CD8-positive, alpha-beta T cell (primary cell): ENCODE measurements at regions of chr7 and their contacts with region 1.

Region 1: GRCh38 chr7:150631866-150632864 is at the start of gene GIMAP6:
- DNase-seq: peak in 8 of 9 experiments; percentile 33 to 79 (median 50)
- ATAC-seq: peak; percentile 61
- H3K4me3 ChIP-seq: peak within 1 kb of the TSS; percentile 82 to 85
- H3K4me3 Mint-ChIP-seq: peak within 1 kb of the TSS; percentile 97
- H3K27ac ChIP-seq: peak within 1 kb of the TSS; percentile 58 to 83
- H3K27ac Mint-ChIP-seq: peak within 1 kb of the TSS; percentile 96
- H3K4me1 ChIP-seq: peaks cover 54% of the 10 kb centered on the region
- H3K4me1 Mint-ChIP-seq: peaks cover 86% of the 10 kb centered on the region
- H3K27me3 ChIP-seq: no peaks in the 10 kb centered on the region
- H3K27me3 Mint-ChIP-seq: no peaks in the 10 kb centered on the region
- CTCF ChIP-seq: no peak
- total RNA-seq, gene GIMAP6: 10.5 to 10.8 TPM

Region 2: DNA sequence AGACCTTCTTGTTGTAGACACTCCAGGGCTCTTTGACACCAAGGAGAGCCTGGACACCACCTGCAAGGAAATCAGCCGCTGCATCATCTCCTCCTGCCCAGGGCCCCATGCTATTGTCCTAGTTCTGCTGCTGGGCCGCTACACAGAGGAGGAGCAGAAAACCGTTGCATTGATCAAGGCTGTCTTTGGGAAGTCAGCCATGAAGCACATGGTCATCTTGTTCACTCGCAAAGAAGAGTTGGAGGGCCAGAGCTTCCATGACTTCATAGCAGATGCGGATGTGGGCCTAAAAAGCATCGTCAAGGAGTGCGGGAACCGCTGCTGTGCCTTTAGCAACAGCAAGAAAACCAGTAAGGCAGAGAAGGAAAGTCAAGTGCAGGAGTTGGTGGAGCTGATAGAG is 112.0 kb before region 1 on chr7:
- CTCF ChIA-PET with region 1: interaction called, 5 read pairs
- POLR2A ChIA-PET with region 1: interaction called, 34 read pairs
- intact Hi-C with region 1: loop called in 1 of 2 experiments (anchors 1 kb)
- DNase-seq: peak in 6 of 9 experiments; percentile 9 to 75 (median 33)
- ATAC-seq: peak; percentile 27
- H3K4me3 ChIP-seq: peak overlapping the region; percentile 58 to 76
- H3K4me3 Mint-ChIP-seq: peak overlapping the region; percentile 100
- H3K27ac ChIP-seq: peak overlapping the region; percentile 58 to 75
- H3K27ac Mint-ChIP-seq: peak overlapping the region; percentile 91
- H3K4me1 ChIP-seq: peaks cover 12% of the 10 kb centered on the region
- H3K4me1 Mint-ChIP-seq: peaks cover 44% of the 10 kb centered on the region
- H3K27me3 ChIP-seq: no peaks in the 10 kb centered on the region
- H3K27me3 Mint-ChIP-seq: no peaks in the 10 kb centered on the region
- CTCF ChIP-seq: no peak

Region 3: DNA sequence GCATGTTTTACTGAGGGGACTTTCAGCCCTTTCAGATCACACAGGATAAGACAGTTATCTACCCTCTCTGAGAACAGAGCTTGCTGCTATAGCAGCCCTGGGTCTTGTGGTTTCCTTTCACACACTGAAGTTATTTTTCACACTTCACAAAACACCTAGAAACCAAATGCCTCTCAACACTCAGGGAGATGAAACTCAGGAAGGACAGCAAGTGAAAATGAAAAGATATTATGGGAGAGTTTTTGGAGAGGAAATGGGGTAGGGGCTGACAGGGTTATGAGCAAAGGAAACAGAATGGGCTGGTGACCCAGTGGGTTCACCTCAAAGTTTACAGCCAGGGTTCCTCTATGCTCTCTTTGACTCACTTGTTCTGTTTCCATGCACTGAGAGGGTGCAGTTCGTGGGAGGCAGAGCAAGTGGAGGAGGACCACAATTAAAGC is 36.3 kb after region 1 on chr7:
- CTCF ChIA-PET with region 1: interaction called, 5 read pairs
- POLR2A ChIA-PET with region 1: interaction called, 44 read pairs
- intact Hi-C with region 1: loop called (anchors 1 to 2 kb)
- DNase-seq: peak in 6 of 9 experiments; percentile 60 to 94 (median 72)
- ATAC-seq: peak; percentile 76
- H3K4me3 ChIP-seq: peak overlapping the region in 1 of 2 experiments; percentile 17
- H3K4me3 Mint-ChIP-seq: peak overlapping the region; percentile 36
- H3K27ac ChIP-seq: peak overlapping the region; percentile 63 to 95
- H3K27ac Mint-ChIP-seq: peak overlapping the region; percentile 97
- H3K4me1 ChIP-seq: peaks cover 88% of the 10 kb centered on the region
- H3K4me1 Mint-ChIP-seq: peaks cover 90% of the 10 kb centered on the region
- H3K27me3 ChIP-seq: no peaks in the 10 kb centered on the region
- H3K27me3 Mint-ChIP-seq: no peaks in the 10 kb centered on the region
- CTCF ChIP-seq: no peak

Region 4: DNA sequence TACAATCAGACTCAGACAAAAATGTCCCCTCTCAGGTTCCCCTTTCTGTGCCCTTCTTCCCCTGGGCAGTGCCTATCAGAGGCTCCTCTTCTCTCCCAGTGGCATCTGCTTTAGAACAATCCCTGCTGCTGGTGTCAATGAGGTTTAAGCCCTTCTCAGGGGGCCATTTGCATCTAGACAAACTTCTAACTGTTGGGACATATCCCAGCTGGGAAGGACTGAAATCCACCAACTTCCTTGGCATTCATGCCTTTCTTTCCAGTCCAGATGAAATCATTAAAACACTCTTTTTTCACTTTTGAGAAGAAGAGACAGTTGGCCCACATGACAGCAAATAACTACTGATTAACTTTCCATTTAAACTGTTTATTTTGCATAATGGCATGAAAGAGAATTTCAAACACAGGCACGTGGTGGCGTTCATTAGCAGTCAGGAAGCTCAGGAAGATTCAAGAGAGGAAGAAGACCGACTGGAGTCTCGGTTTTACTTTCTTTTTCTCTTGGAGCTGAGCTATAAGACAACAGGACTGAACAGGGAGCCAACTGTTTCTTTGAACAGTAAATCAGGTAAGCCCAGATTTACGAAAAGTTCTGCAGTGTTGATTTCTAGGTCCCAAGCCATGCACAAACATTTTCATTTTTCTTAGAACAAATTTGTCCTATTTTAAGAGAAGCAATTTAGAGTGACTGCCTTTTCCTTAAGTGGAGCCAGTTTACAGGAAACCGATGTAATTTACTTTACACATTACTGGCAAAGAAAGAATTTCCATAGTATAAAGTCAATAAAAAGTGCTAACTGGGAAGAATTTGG is 53.3 kb after region 1 on chr7 and contains the start of gene GIMAP2:
- CTCF ChIA-PET with region 1: interaction called, 5 read pairs
- POLR2A ChIA-PET with region 1: interaction called, 43 read pairs
- intact Hi-C with region 1: loop called (anchors 5 kb)
- DNase-seq: peak in 3 of 9 experiments; percentile 26 to 81 (median 68)
- ATAC-seq: peak; percentile 77
- H3K4me3 ChIP-seq: peak within 1 kb of the TSS; percentile 62 to 69
- H3K4me3 Mint-ChIP-seq: peak within 1 kb of the TSS; percentile 96
- H3K27ac ChIP-seq: peak within 1 kb of the TSS; percentile 66 to 81
- H3K27ac Mint-ChIP-seq: peak within 1 kb of the TSS; percentile 99
- H3K4me1 ChIP-seq: peaks cover 54% of the 10 kb centered on the region
- H3K4me1 Mint-ChIP-seq: peaks cover 82% of the 10 kb centered on the region
- H3K27me3 ChIP-seq: no peaks in the 10 kb centered on the region
- H3K27me3 Mint-ChIP-seq: no peaks in the 10 kb centered on the region
- CTCF ChIP-seq: no peak
- total RNA-seq, gene GIMAP2: 58.4 to 58.8 TPM

Region 5: GRCh38 chr7:150748376-150748775 is 116.2 kb after region 1 on chr7:
- CTCF ChIA-PET with region 1: interaction called, 4 read pairs
- POLR2A ChIA-PET with region 1: interaction called, 13 read pairs
- intact Hi-C with region 1: no loop called
- DNase-seq: peak in 2 of 9 experiments; percentile 44 to 68
- ATAC-seq: peak; percentile 52
- H3K4me3 ChIP-seq: no peak overlapping the region
- H3K4me3 Mint-ChIP-seq: peak overlapping the region; percentile 20
- H3K27ac ChIP-seq: peak overlapping the region; percentile 11 to 65
- H3K27ac Mint-ChIP-seq: peak overlapping the region; percentile 97
- H3K4me1 ChIP-seq: peaks cover 94% of the 10 kb centered on the region
- H3K4me1 Mint-ChIP-seq: peaks cover 91% of the 10 kb centered on the region
- H3K27me3 ChIP-seq: no peaks in the 10 kb centered on the region
- H3K27me3 Mint-ChIP-seq: no peaks in the 10 kb centered on the region
- CTCF ChIP-seq: no peak

Region 6: GRCh38 chr7:150898475-150899011 is 266.4 kb after region 1 on chr7:
- CTCF ChIA-PET with region 1: no interaction called
- POLR2A ChIA-PET with region 1: no interaction called
- intact Hi-C with region 1: no loop called
- DNase-seq: peak; percentile 60 to 90 (median 79)
- ATAC-seq: peak; percentile 69
- H3K4me3 ChIP-seq: no peak overlapping the region
- H3K4me3 Mint-ChIP-seq: no peak overlapping the region
- H3K27ac ChIP-seq: no peak overlapping the region
- H3K27ac Mint-ChIP-seq: no peak overlapping the region
- H3K4me1 ChIP-seq: peaks cover 7% of the 10 kb centered on the region
- H3K4me1 Mint-ChIP-seq: peaks cover 9% of the 10 kb centered on the region
- H3K27me3 ChIP-seq: peaks cover 0 to 4% of the 10 kb centered on the region in 2 experiments
- H3K27me3 Mint-ChIP-seq: peaks cover 61% of the 10 kb centered on the region
- CTCF ChIP-seq: peak; percentile 92